MCF 10A (cell line): ENCODE measurements at regions of chr4 and their contacts with region 1.

Region 1: GRCh38 chr4:152972821-152973628 is 36.9 kb downstream of the FHDC1 start:
- DNase-seq: peak; percentile 69
- H3K4me3 Mint-ChIP-seq: no peak overlapping the region
- H3K27ac Mint-ChIP-seq: no peak overlapping the region
- H3K4me1 Mint-ChIP-seq: peaks cover 36% of the 10 kb centered on the region
- H3K27me3 Mint-ChIP-seq: no peaks in the 10 kb centered on the region
- CTCF ChIP-seq: no peak

Region 2: DNA sequence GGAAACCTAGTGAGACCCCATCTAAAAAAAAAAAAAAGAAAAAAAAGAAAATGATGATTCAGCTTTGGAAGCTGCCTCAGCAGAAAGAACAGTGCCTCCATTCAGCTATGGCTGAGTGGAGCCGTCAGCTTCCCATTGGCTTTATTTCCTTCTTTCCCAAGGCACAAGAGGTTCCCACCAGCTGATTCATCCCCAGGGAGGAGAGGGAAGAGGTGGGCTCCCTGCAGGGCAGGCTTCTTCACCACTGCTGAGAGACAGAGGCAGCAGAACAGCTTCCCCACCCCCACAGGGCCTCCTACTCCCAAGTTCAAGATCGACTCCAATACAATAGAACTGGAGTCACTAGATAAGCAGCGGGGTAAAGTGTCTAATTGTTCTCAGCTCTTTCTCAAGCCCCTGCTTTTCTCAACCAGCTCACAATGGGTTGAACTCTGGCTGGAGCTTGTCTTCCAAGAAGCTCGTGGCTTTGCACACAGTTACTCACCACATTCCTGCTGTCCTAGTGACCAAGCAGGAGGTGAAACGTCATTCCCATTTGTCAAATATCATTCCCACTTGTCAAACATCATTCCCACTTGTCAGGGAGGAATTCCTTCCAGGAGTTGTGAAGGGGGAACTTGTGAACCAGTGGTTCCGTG is 10.9 kb after region 1 on chr4:
- CTCF ChIA-PET with region 1: interaction called, 8 read pairs
- POLR2A ChIA-PET with region 1: interaction called, 48 read pairs
- intact Hi-C with region 1: no loop called
- DNase-seq: peak; percentile 58
- H3K4me3 Mint-ChIP-seq: no peak overlapping the region
- H3K27ac Mint-ChIP-seq: no peak overlapping the region
- H3K4me1 Mint-ChIP-seq: peaks cover 19% of the 10 kb centered on the region
- H3K27me3 Mint-ChIP-seq: no peaks in the 10 kb centered on the region
- CTCF ChIP-seq: no peak

Region 3: GRCh38 chr4:152996108-152996571 is 23.1 kb after region 1 on chr4:
- CTCF ChIA-PET with region 1: interaction called, 3 read pairs
- POLR2A ChIA-PET with region 1: interaction called, 53 read pairs
- intact Hi-C with region 1: no loop called
- DNase-seq: no peak
- H3K4me3 Mint-ChIP-seq: no peak overlapping the region
- H3K27ac Mint-ChIP-seq: peak overlapping the region; percentile 9
- H3K4me1 Mint-ChIP-seq: peaks cover 18% of the 10 kb centered on the region
- H3K27me3 Mint-ChIP-seq: no peaks in the 10 kb centered on the region
- CTCF ChIP-seq: no peak

Region 4: GRCh38 chr4:153344131-153345010 is 371.3 kb after region 1 on chr4 and contains the start of gene MND1:
- CTCF ChIA-PET with region 1: no interaction called
- POLR2A ChIA-PET with region 1: no interaction called
- intact Hi-C with region 1: no loop called
- DNase-seq: peak; percentile 84
- H3K4me3 Mint-ChIP-seq: peak within 1 kb of the TSS; percentile 84
- H3K27ac Mint-ChIP-seq: peak within 1 kb of the TSS; percentile 16
- H3K4me1 Mint-ChIP-seq: peaks cover 33% of the 10 kb centered on the region
- H3K27me3 Mint-ChIP-seq: no peaks in the 10 kb centered on the region
- CTCF ChIP-seq: peak; percentile 98
- total RNA-seq, gene MND1: 4.8 and 9.7 TPM in 2 replicates

Region 5: DNA sequence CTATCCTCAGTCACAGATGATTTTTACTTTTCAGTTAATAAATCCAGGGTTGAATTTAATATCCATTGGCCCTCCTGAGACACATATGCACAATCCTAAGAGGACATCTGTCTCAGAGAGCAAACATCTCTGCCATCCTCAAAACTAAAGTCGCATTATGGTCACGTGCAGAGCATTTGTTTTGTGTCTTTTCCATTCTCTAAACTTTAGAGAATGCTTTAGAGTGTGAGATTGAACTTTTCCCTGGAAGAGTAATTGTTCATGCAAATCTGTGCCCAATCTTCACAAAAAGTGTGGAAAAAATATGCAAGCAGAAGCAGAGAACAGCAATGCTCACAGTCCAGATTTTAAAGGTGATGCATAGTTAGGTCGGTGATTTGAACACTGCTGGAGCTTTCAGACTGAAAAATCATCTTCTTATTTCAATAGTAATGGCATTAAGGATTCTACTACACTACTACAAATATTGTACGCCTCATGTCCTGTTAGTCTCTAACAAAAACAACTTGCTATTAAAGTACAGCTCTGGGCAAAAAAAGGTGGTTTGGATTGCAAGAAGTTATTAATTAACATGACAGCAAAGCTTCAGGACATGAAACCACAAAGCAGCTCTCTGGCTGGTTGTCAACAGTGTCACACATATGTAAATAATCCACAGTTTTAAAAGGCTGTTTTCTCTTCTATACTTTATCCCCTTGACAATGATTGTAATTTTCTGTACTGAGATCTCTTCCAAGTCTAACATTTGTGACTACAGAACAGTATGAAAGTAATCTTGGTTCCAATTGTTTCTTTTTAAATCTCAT is 1498.7 kb after region 1 on chr4:
- CTCF ChIA-PET with region 1: no interaction called
- POLR2A ChIA-PET with region 1: no interaction called
- intact Hi-C with region 1: no loop called
- DNase-seq: peak; percentile 8
- H3K4me3 Mint-ChIP-seq: no peak overlapping the region
- H3K27ac Mint-ChIP-seq: no peak overlapping the region
- H3K4me1 Mint-ChIP-seq: peaks cover 17% of the 10 kb centered on the region
- H3K27me3 Mint-ChIP-seq: no peaks in the 10 kb centered on the region
- CTCF ChIP-seq: no peak